GM13977 (cell line): ENCODE measurements at regions of chr4 and their contacts with region 1.

Region 1: GRCh38 chr4:120156120-120156718 is 89.6 kb upstream of the MAD2L1 start:
- DNase-seq: peak; percentile 10
- CTCF ChIP-seq: peak; percentile 75

Region 2: GRCh38 chr4:119921830-119922229 is 234.4 kb before region 1 on chr4:
- in situ Hi-C with region 1: no loop called
- DNase-seq: no peak
- CTCF ChIP-seq: no peak

Region 3: DNA sequence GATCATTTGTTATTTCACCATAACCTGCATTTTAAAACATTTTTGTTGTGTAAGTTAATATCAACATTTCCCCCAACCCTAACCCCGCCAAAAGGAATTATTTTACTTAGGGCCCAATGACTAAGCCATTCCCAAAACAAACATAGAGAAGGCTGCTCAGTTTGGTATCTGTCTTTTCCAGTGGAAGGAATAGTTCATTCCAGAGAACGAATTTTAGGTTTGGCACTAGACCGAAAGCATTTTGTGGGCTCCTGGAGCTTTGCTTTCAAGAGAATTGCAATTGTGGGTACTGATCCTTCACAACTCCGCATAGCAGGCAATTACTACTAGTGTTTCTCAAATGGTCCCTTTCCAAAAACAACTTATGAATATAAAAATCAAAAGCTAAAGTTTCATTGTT is 137.1 kb after region 1 on chr4:
- in situ Hi-C with region 1: no loop called
- DNase-seq: no peak
- CTCF ChIP-seq: no peak

Region 4: DNA sequence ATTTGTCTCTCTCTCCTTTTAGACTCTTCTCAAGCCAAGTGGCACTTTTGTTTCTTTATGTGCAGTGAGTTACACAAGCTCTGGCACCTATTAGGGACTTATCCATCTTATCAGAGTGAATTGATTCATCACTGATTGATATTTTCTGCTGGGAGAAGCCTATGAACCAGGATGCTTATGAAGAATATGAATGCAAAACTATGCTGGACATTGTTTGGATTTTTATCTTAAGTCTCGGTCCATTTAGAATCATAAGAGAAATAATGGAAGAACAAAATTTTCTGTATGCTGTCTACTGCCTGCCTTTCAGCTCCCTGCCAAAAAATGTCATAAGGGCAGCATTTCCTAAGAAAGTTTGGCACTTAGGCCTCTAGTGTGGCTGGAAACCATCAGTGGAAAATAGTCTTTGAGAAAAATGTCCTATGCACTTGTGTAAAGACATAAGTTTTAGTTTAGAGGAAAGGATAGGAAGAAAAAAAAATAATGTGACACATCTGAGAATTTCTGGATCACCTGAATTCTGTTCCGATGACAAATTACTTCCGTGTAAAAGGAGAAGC is 276.2 kb after region 1 on chr4:
- in situ Hi-C with region 1: no loop called
- DNase-seq: no peak
- CTCF ChIP-seq: no peak

Region 5: DNA sequence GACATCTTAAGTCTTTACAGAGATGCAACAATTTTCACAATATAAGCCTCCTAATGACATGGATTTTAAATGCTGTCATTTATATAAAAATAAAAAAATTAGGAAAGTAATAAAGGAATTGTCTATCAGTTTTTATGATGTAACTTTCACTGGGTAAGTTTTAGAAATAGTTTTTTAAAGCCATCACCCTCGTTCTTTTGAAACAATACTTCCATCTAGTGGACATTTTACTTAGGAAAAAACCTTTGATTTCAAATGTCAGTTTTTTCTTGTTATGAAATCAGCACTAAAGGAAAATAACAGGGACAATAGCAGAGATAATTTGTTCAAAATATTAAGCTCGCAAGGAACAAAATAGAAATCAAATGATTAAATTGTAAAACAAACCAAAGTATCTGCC is 940.4 kb after region 1 on chr4:
- in situ Hi-C with region 1: loop called (anchors 25 kb)
- DNase-seq: no peak
- CTCF ChIP-seq: peak; percentile 40